Mammary epithelial cell (primary cell): ENCODE measurements at regions of chr1 and their contacts with region 1.

Region 1: GRCh38 chr1:150444232-150444631 is 43.0 kb upstream of the TARS2 start:
- DNase-seq: no peak
- H3K4me3 ChIP-seq: no peak overlapping the region
- H3K27ac ChIP-seq: no peak overlapping the region
- H3K4me1 ChIP-seq: no peaks in the 10 kb centered on the region
- H3K27me3 ChIP-seq: no peaks in the 10 kb centered on the region
- CTCF ChIP-seq: no peak

Region 2: GRCh38 chr1:150507905-150508854 is 63.9 kb after region 1 on chr1 and contains the start of gene ECM1:
- CTCF ChIA-PET with region 1: no interaction called
- dilution Hi-C with region 1: loop called (anchors 5 kb)
- in situ Hi-C with region 1: no loop called
- intact Hi-C with region 1: no loop called
- DNase-seq: peak; percentile 62
- H3K4me3 ChIP-seq: no peak within 1 kb of the TSS
- H3K27ac ChIP-seq: peak within 1 kb of the TSS; percentile 8
- H3K4me1 ChIP-seq: peaks cover 8% of the 10 kb centered on the region
- H3K27me3 ChIP-seq: no peaks in the 10 kb centered on the region
- CTCF ChIP-seq: no peak
- total RNA-seq, gene ECM1: 12.5 to 16.2 TPM